ENCODE measurements at regions of chr12 and their contacts with region 1.

Region 1: GRCh38 chr12:51980051-51980808 is 26.5 kb upstream of the TAMALIN start:
- DNase-seq: peak; percentile 84
- ATAC-seq: peak; percentile 97
- H3K4me3 ChIP-seq: no peak overlapping the region
- H3K4me3 Mint-ChIP-seq: no peak overlapping the region
- H3K27ac ChIP-seq: no peak overlapping the region
- H3K27ac Mint-ChIP-seq: no peak overlapping the region
- H3K4me1 ChIP-seq: peaks cover 3 to 6% of the 10 kb centered on the region in 2 donors
- H3K4me1 Mint-ChIP-seq: peaks cover 10% of the 10 kb centered on the region
- H3K27me3 ChIP-seq: no peaks in the 10 kb centered on the region
- H3K27me3 Mint-ChIP-seq: no peaks in the 10 kb centered on the region
- CTCF ChIP-seq: peak; percentile 94

Region 2: GRCh38 chr12:51891843-51892242 is 88.4 kb before region 1 on chr12:
- CTCF ChIA-PET with region 1: interaction called, 17 read pairs
- POLR2A ChIA-PET with region 1: interaction called, 4 read pairs
- intact Hi-C with region 1: loop called (anchors 1 kb)
- DNase-seq: no peak
- ATAC-seq: no peak
- H3K4me3 ChIP-seq: no peak overlapping the region
- H3K4me3 Mint-ChIP-seq: no peak overlapping the region
- H3K27ac ChIP-seq: no peak overlapping the region
- H3K27ac Mint-ChIP-seq: no peak overlapping the region
- H3K4me1 ChIP-seq: peaks cover 0 to 7% of the 10 kb centered on the region in 2 donors
- H3K4me1 Mint-ChIP-seq: no peaks in the 10 kb centered on the region
- H3K27me3 ChIP-seq: peaks cover 0 to 15% (median 0%) of the 10 kb centered on the region in 4 experiments
- H3K27me3 Mint-ChIP-seq: peaks cover 11% of the 10 kb centered on the region
- CTCF ChIP-seq: peak; percentile 44

Region 3: GRCh38 chr12:51923501-51924271 is 56.5 kb before region 1 on chr12:
- CTCF ChIA-PET with region 1: interaction called, 11 read pairs
- POLR2A ChIA-PET with region 1: no interaction called
- intact Hi-C with region 1: loop called (anchors 1 kb)
- DNase-seq: peak; percentile 64
- ATAC-seq: peak; percentile 61
- H3K4me3 ChIP-seq: peak overlapping the region in 3 of 5 experiments; percentile 10 to 40 (median 12)
- H3K4me3 Mint-ChIP-seq: peak overlapping the region; percentile 65
- H3K27ac ChIP-seq: no peak overlapping the region
- H3K27ac Mint-ChIP-seq: peak overlapping the region; percentile 46
- H3K4me1 ChIP-seq: peaks cover 23 to 31% of the 10 kb centered on the region in 2 donors
- H3K4me1 Mint-ChIP-seq: peaks cover 33% of the 10 kb centered on the region
- H3K27me3 ChIP-seq: peaks cover 0 to 4% (median 2%) of the 10 kb centered on the region in 4 experiments
- H3K27me3 Mint-ChIP-seq: peaks cover 3% of the 10 kb centered on the region
- CTCF ChIP-seq: peak; percentile 75

Region 4: DNA sequence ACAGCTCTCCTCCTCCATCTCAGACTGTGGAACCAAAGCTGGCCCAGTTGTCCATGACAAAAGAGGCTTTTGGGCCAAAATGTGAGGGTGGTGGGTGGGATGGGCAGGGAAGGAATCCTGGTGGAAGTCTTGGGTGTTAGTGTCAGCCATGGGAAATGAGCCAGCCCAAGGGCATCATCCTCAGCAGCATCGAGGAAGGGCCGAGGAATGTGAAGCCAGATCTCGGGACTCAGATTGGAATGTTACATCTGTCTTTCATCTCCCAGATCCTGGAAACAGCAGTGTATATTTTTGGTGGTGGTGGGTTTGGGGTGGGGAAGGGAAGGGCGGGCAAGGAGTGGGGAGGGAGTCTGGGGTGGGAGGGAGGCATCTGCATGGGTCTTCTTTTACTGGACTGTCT is 14.7 kb after region 1 on chr12:
- CTCF ChIA-PET with region 1: interaction called, 11 read pairs
- POLR2A ChIA-PET with region 1: no interaction called
- intact Hi-C with region 1: no loop called
- DNase-seq: no peak
- ATAC-seq: no peak
- H3K4me3 ChIP-seq: no peak overlapping the region
- H3K4me3 Mint-ChIP-seq: no peak overlapping the region
- H3K27ac ChIP-seq: no peak overlapping the region
- H3K27ac Mint-ChIP-seq: no peak overlapping the region
- H3K4me1 ChIP-seq: no peaks in the 10 kb centered on the region
- H3K4me1 Mint-ChIP-seq: peaks cover 2% of the 10 kb centered on the region
- H3K27me3 ChIP-seq: no peaks in the 10 kb centered on the region
- H3K27me3 Mint-ChIP-seq: no peaks in the 10 kb centered on the region
- CTCF ChIP-seq: no peak

Region 5: DNA sequence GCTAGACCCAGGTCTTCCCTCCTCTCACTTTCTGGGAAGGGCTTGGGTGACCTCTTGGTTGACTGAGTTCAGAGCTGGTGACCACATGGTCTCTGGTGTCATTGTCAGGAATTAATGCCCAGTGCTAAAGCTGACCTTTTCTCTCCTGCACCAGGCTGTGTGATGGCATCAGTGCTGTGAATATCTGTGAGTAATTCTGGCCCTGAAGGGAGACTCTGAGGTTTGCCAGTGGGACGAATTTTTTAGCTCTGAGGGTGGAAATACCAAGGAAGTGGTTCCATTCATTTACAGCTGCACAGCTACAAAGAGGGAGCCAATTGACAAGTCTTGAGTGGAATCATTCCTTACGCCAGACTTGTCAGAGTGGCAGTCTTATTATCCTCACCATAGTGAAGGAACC is 288.0 kb after region 1 on chr12:
- CTCF ChIA-PET with region 1: no interaction called
- POLR2A ChIA-PET with region 1: no interaction called
- intact Hi-C with region 1: no loop called
- DNase-seq: no peak
- ATAC-seq: no peak
- H3K4me3 ChIP-seq: no peak overlapping the region
- H3K4me3 Mint-ChIP-seq: no peak overlapping the region
- H3K27ac ChIP-seq: no peak overlapping the region
- H3K27ac Mint-ChIP-seq: no peak overlapping the region
- H3K4me1 ChIP-seq: no peaks in the 10 kb centered on the region
- H3K4me1 Mint-ChIP-seq: no peaks in the 10 kb centered on the region
- H3K27me3 ChIP-seq: peaks cover 0 to 6% (median under 1%) of the 10 kb centered on the region in 4 experiments
- H3K27me3 Mint-ChIP-seq: peaks cover 17% of the 10 kb centered on the region
- CTCF ChIP-seq: no peak

Measured in B cell (primary cell).